Activated T-helper 2 cell treated with anti-CD3 and anti-CD28 coated beads, Interferon-gamma antibody, Interleukin-2, Interleukin-4, amounts not matched to agents 10 μg/mL and 5 μg/mL and 100 μg/mL, durations not matched to agents 14 hours and 24 hours and 36 hours (primary cell): ENCODE measurements at regions of chr6 and their contacts with region 1.

Region 1: DNA sequence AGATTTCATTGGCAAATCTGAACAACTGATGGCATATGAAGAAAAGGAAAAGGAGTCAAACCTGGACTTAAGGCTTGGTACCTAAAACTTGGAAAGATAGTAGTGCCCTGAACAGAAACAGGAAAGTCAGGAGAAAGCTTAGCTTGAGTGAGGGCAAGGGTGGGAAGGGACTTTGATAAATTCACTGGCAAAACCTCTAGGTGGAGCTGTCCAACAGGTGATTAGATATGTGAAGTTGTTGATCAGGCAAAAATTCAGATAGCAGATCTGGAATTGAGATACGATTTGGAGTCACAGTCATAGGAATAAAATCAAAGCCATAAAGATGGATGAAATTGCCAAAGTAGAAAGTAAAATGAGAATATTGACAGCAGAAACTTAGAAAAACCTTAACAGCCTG is 16.1 kb upstream of the ZNF292 start:
- DNase-seq: no peak
- H3K4me3 Mint-ChIP-seq: no peak overlapping the region
- H3K27ac Mint-ChIP-seq: no peak overlapping the region
- H3K4me1 Mint-ChIP-seq: peaks cover 1% of the 10 kb centered on the region
- H3K27me3 Mint-ChIP-seq: peaks cover 48% of the 10 kb centered on the region

Region 2: DNA sequence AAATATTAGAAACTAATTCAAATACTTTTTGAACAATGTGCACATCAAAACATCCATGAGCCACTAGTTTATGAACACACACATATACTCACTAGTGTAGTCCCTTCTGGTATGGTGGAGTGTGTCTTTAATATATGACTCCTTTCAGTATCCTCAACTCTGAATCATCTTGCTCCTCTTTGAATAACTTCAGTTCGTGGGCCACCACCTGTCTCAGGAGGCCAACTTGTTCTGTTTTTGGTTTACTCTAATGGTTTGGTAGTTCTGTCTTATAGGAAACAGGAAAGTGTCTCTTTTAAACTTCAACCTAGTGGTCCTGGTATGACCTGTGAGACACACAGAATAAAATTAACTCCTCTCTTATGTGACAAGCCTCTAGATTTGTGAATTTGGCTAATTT is 71.7 kb after region 1 on chr6:
- intact Hi-C with region 1: no loop called
- DNase-seq: no peak
- H3K4me3 Mint-ChIP-seq: no peak overlapping the region
- H3K27ac Mint-ChIP-seq: peak overlapping the region; percentile 58
- H3K4me1 Mint-ChIP-seq: peaks cover 51% of the 10 kb centered on the region
- H3K27me3 Mint-ChIP-seq: no peaks in the 10 kb centered on the region

Region 3: DNA sequence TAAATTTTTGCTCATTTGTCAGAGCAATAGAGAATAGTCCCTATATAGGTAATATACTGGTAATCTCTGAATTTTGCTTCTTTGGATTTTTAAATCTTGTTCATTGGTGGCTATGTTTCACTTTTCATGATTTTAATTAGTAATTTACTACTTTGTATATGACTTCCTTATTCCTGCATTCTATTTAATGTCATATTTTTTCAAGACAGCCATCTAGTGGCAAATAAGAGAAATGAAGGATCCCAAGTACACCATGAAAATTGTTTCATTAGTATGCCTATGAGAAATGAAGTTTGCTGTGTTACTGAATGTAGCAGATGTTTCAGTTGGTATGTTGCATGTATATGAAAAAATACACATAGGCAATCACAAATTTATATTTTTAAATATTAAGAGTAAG is 98.6 kb after region 1 on chr6:
- intact Hi-C with region 1: loop called (anchors 5 kb)
- DNase-seq: no peak
- H3K4me3 Mint-ChIP-seq: no peak overlapping the region
- H3K27ac Mint-ChIP-seq: no peak overlapping the region
- H3K4me1 Mint-ChIP-seq: peaks cover 6% of the 10 kb centered on the region
- H3K27me3 Mint-ChIP-seq: no peaks in the 10 kb centered on the region

Region 4: GRCh38 chr6:87393022-87393622 is 253.9 kb after region 1 on chr6:
- intact Hi-C with region 1: loop called (anchors 2 kb)
- DNase-seq: no peak
- H3K4me3 Mint-ChIP-seq: no peak overlapping the region
- H3K27ac Mint-ChIP-seq: no peak overlapping the region
- H3K4me1 Mint-ChIP-seq: no peaks in the 10 kb centered on the region
- H3K27me3 Mint-ChIP-seq: no peaks in the 10 kb centered on the region